ENCODE measurements at regions of chr6 and their contacts with region 1.

Region 1: DNA sequence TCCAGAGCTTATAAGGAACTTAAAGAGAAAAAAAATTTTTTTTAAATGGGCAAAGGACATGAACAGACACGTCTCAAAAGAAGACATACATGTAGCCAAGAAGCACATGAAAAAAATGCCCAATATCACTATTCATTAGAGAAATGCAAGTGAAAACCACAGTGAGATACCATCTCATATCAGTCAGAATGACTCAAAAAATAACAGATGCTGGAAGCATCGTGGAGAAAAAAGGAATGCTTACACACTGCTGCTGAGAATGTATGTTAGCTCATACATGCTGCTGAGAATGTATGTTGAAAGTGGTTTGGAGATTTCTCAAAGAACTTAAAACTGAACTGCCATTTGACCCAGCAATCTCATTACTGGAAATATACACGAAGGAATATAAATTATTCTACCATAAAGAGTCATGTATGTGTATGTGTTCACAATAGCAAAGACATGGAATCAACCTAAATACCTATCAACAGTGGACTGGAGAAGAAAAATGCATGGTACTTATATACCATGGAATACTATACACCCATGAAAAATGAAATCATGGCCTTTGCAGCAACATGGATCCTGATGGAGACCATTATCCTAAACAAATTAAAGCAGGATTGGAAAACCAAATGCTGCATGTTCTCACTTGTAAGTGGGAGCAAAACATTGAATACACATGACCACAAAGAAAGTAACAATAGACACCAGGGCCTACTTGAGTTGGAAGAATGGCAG is 5.2 kb downstream of the OR11A1 start:
- DNase-seq: no peak
- ATAC-seq: no peak
- H3K4me3 Mint-ChIP-seq: no peak overlapping the region
- H3K27ac Mint-ChIP-seq: no peak overlapping the region
- H3K4me1 Mint-ChIP-seq: peaks cover 12% of the 10 kb centered on the region
- H3K27me3 Mint-ChIP-seq: no peaks in the 10 kb centered on the region
- CTCF ChIP-seq: no peak

Region 2: GRCh38 chr6:29524444-29525310 is 73.0 kb after region 1 on chr6:
- CTCF ChIA-PET with region 1: no interaction called
- POLR2A ChIA-PET with region 1: no interaction called
- DNase-seq: no peak
- ATAC-seq: peak; percentile 82
- H3K4me3 Mint-ChIP-seq: no peak overlapping the region
- H3K27ac Mint-ChIP-seq: peak overlapping the region; percentile 90
- H3K4me1 Mint-ChIP-seq: peaks cover 20% of the 10 kb centered on the region
- H3K27me3 Mint-ChIP-seq: no peaks in the 10 kb centered on the region; the same call in 1 of the 2 replicates
- CTCF ChIP-seq: no peak

Region 3: DNA sequence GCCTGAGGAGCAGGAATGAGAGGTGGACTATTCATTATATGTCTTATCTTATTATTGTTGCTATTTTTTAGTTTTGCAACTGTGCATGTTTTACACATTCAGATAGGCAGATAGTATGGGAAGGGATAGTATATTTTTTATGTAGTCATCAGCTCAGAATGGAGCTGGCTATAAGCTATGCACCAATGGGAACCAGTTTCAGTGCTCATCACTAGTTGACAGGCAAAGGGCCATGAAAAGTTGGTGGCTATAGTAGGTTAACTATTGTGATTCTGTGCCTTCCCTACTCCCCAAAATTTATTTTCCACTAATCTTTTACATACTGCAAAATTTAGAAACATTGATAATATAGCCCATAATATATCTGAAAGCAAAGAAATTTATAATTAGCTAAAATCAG is 113.2 kb after region 1 on chr6:
- CTCF ChIA-PET with region 1: no interaction called
- POLR2A ChIA-PET with region 1: interaction called, 10 read pairs
- DNase-seq: no peak
- ATAC-seq: no peak
- H3K4me3 Mint-ChIP-seq: no peak overlapping the region
- H3K27ac Mint-ChIP-seq: no peak overlapping the region
- H3K4me1 Mint-ChIP-seq: peaks cover 3% of the 10 kb centered on the region
- H3K27me3 Mint-ChIP-seq: peaks cover 40% of the 10 kb centered on the region
- CTCF ChIP-seq: no peak